CD8-positive, alpha-beta T cell (primary cell): ENCODE measurements at regions of chr19 and their contacts with region 1.

Region 1: GRCh38 chr19:51422053-51422448 is 4.6 kb upstream of the SIGLEC10 start:
- DNase-seq: peak; percentile 67 to 93 (median 85)
- ATAC-seq: peak; percentile 94
- H3K4me3 ChIP-seq: no peak overlapping the region
- H3K4me3 Mint-ChIP-seq: no peak overlapping the region
- H3K27ac ChIP-seq: no peak overlapping the region
- H3K27ac Mint-ChIP-seq: no peak overlapping the region
- H3K4me1 ChIP-seq: no peaks in the 10 kb centered on the region
- H3K4me1 Mint-ChIP-seq: peaks cover 8% of the 10 kb centered on the region
- H3K27me3 ChIP-seq: peaks cover 7 to 10% of the 10 kb centered on the region in 2 experiments
- H3K27me3 Mint-ChIP-seq: peaks cover 25% of the 10 kb centered on the region
- CTCF ChIP-seq: peak; percentile 97

Region 2: GRCh38 chr19:51357952-51358351 is 64.1 kb before region 1 on chr19:
- CTCF ChIA-PET with region 1: no interaction called
- POLR2A ChIA-PET with region 1: no interaction called
- intact Hi-C with region 1: no loop called
- DNase-seq: no peak
- ATAC-seq: no peak
- H3K4me3 ChIP-seq: no peak overlapping the region
- H3K4me3 Mint-ChIP-seq: no peak overlapping the region
- H3K27ac ChIP-seq: no peak overlapping the region
- H3K27ac Mint-ChIP-seq: no peak overlapping the region
- H3K4me1 ChIP-seq: peaks cover 19% of the 10 kb centered on the region
- H3K4me1 Mint-ChIP-seq: peaks cover 37% of the 10 kb centered on the region
- H3K27me3 ChIP-seq: no peaks in the 10 kb centered on the region
- H3K27me3 Mint-ChIP-seq: no peaks in the 10 kb centered on the region
- CTCF ChIP-seq: no peak

Region 3: DNA sequence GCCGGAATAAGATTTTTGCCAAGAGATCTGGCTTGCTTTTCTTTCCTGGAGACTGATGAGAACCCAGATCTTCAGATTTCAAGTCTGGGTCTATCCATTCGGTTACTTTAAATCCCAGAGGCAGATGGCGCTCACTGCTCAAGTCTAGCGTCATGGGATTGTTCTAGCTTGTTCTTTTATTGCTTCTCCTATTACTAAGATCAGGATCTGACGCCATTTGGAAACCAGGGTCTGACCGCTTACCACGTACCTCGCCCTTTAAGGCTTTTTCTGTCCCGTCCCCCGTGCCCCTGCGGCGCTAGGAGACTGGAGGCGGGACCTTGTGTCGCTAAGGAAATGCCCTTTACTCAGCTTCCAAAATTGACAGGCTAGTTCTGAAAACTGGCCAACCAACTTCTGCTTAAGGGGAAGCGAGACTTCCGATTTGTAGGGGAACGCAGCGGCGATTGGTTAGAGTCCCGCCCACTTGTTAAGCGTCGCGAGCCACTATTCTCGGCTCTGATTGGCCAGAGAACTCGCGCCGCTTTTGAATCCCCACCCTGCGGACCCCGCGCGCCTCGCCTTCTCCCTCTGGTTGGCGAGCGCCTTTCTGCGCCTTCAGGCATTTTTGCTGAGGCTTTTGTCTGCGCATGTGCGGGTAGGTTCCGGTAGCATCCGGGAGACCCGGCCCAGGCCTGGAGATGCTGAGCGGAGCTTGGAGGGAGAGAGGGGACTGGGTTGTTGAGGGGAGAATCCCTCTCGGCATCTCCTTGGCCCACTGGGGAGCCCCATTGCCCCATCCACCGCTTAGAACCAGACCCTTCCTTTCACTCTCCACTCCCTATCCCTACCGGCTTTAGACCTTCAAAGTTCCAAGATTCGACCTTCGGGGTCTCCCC is 27.9 kb before region 1 on chr19:
- CTCF ChIA-PET with region 1: interaction called, 22 read pairs
- POLR2A ChIA-PET with region 1: no interaction called
- intact Hi-C with region 1: loop called in 1 of 2 experiments (anchors 2 kb)
- DNase-seq: peak; percentile 69 to 97 (median 85)
- ATAC-seq: peak; percentile 88
- H3K4me3 ChIP-seq: peak overlapping the region; percentile 45 to 51
- H3K4me3 Mint-ChIP-seq: peak overlapping the region; percentile 84
- H3K27ac ChIP-seq: peak overlapping the region; percentile 31 to 74
- H3K27ac Mint-ChIP-seq: peak overlapping the region; percentile 84
- H3K4me1 ChIP-seq: peaks cover 22% of the 10 kb centered on the region
- H3K4me1 Mint-ChIP-seq: peaks cover 30% of the 10 kb centered on the region
- H3K27me3 ChIP-seq: no peaks in the 10 kb centered on the region
- H3K27me3 Mint-ChIP-seq: no peaks in the 10 kb centered on the region
- CTCF ChIP-seq: no peak

Region 4: GRCh38 chr19:51441410-51442390 is 19.6 kb after region 1 on chr19:
- CTCF ChIA-PET with region 1: interaction called, 81 read pairs
- POLR2A ChIA-PET with region 1: no interaction called
- intact Hi-C with region 1: loop called (anchors 1 kb)
- DNase-seq: peak; percentile 56 to 95 (median 81)
- ATAC-seq: peak; percentile 91
- H3K4me3 ChIP-seq: peak overlapping the region; percentile 21 to 32
- H3K4me3 Mint-ChIP-seq: peak overlapping the region; percentile 75
- H3K27ac ChIP-seq: peak overlapping the region; percentile 24 to 83
- H3K27ac Mint-ChIP-seq: peak overlapping the region; percentile 93
- H3K4me1 ChIP-seq: peaks cover 31% of the 10 kb centered on the region
- H3K4me1 Mint-ChIP-seq: peaks cover 43% of the 10 kb centered on the region
- H3K27me3 ChIP-seq: peaks cover 0 to 2% of the 10 kb centered on the region in 2 experiments
- H3K27me3 Mint-ChIP-seq: peaks cover 7% of the 10 kb centered on the region
- CTCF ChIP-seq: peak; percentile 27

Region 5: GRCh38 chr19:51514866-51515481 is 92.9 kb after region 1 on chr19:
- CTCF ChIA-PET with region 1: interaction called, 40 read pairs
- POLR2A ChIA-PET with region 1: interaction called, 3 read pairs
- intact Hi-C with region 1: loop called (anchors 1 kb)
- DNase-seq: peak in 5 of 9 experiments; percentile 4 to 68 (median 20)
- ATAC-seq: no peak
- H3K4me3 ChIP-seq: no peak overlapping the region
- H3K4me3 Mint-ChIP-seq: no peak overlapping the region
- H3K27ac ChIP-seq: no peak overlapping the region
- H3K27ac Mint-ChIP-seq: no peak overlapping the region
- H3K4me1 ChIP-seq: no peaks in the 10 kb centered on the region
- H3K4me1 Mint-ChIP-seq: no peaks in the 10 kb centered on the region
- H3K27me3 ChIP-seq: no peaks in the 10 kb centered on the region
- H3K27me3 Mint-ChIP-seq: peaks cover 28% of the 10 kb centered on the region
- CTCF ChIP-seq: peak; percentile 83

Region 6: GRCh38 chr19:51660975-51661600 is 239.0 kb after region 1 on chr19:
- CTCF ChIA-PET with region 1: interaction called, 11 read pairs
- POLR2A ChIA-PET with region 1: no interaction called
- intact Hi-C with region 1: loop called in 1 of 2 experiments (anchors 5 kb)
- DNase-seq: peak in 5 of 9 experiments; percentile 41 to 54 (median 53)
- ATAC-seq: no peak
- H3K4me3 ChIP-seq: no peak overlapping the region
- H3K4me3 Mint-ChIP-seq: no peak overlapping the region
- H3K27ac ChIP-seq: no peak overlapping the region
- H3K27ac Mint-ChIP-seq: no peak overlapping the region
- H3K4me1 ChIP-seq: peaks cover 3% of the 10 kb centered on the region
- H3K4me1 Mint-ChIP-seq: peaks cover 5% of the 10 kb centered on the region
- H3K27me3 ChIP-seq: peaks cover 0 to 6% of the 10 kb centered on the region in 2 experiments
- H3K27me3 Mint-ChIP-seq: peaks cover 35% of the 10 kb centered on the region
- CTCF ChIP-seq: peak; percentile 17